ENCODE measurements at regions of chr2 and their contacts with region 1.

Region 1: DNA sequence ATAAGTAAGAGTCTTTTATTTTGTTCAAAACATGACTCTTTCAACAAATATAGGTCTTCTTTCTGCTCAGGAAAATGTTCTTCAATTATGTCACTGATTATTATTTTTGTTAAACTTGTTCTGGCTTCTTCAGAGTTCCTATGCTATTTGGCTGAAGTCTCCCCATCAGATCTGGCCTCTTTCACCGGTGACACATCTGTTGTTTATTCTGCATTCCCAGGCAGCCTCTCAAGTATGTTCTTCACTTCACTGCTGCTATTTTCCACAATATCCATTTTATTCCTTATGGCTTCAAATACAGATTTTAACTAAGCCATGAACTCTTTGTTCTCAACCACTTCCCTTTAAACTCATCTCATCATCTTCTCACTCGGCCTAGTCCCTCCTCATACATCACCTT is 45.7 kb downstream of the HDAC4 start:
- DNase-seq: no peak
- ATAC-seq: no peak
- H3K4me3 ChIP-seq: no peak overlapping the region
- H3K27ac ChIP-seq: no peak overlapping the region
- H3K4me1 ChIP-seq: peaks cover 15% of the 10 kb centered on the region
- H3K27me3 ChIP-seq: no peaks in the 10 kb centered on the region
- CTCF ChIP-seq: no peak
- EP300 ChIP-seq: no peak
- POLR2A ChIP-seq: no peak
- RAD21 ChIP-seq: no peak

Region 2: DNA sequence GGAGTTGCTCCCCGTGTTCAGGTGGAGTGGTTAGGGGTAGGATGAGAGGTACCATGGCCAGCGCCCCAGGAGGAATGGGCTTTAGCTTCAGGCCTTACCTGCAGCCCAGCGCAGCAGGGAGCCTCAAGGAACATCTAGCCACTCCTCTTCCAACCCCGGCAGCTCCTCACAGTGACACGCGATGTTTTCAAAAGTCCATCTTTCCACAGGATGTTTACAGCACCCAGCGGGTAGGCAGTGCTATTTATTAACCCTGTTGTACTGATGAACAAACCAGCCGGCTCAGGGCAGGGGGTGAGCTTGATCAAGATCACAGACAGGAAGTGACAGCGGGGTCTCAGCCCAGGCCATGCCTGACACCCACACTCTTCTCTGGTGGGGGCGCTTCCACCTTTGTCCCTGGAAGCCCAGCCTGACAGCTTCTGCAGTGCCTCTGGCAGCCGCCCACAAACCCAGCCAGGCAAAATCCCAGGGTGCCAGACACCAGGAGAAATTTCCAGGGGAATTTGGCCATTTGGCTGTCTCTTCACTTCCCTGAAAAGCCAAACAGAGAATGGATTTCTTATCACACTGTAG is 1807.2 kb before region 1 on chr2:
- CTCF ChIA-PET with region 1: no interaction called
- POLR2A ChIA-PET with region 1: no interaction called
- in situ Hi-C with region 1: no loop called
- intact Hi-C with region 1: no loop called
- DNase-seq: peak; percentile 30
- ATAC-seq: peak; percentile 40
- H3K4me3 ChIP-seq: peak overlapping the region in 2 of 3 experiments; percentile 20 to 47; a peak in 2 of 6 replicates
- H3K27ac ChIP-seq: no peak overlapping the region
- H3K4me1 ChIP-seq: peaks cover 49% of the 10 kb centered on the region
- H3K27me3 ChIP-seq: peaks cover 5 to 34% of the 10 kb centered on the region in 2 experiments; a peak in 4 of 5 replicates
- CTCF ChIP-seq: no peak
- EP300 ChIP-seq: no peak
- POLR2A ChIP-seq: no peak
- RAD21 ChIP-seq: no peak

Region 3: GRCh38 chr2:239181907-239182581 is 173.1 kb before region 1 on chr2:
- CTCF ChIA-PET with region 1: no interaction called
- POLR2A ChIA-PET with region 1: no interaction called
- in situ Hi-C with region 1: no loop called
- intact Hi-C with region 1: no loop called
- DNase-seq: peak; percentile 71
- ATAC-seq: peak; percentile 89
- H3K4me3 ChIP-seq: no peak overlapping the region
- H3K27ac ChIP-seq: peak overlapping the region; percentile 12
- H3K4me1 ChIP-seq: peaks cover 24% of the 10 kb centered on the region
- H3K27me3 ChIP-seq: no peaks in the 10 kb centered on the region
- CTCF ChIP-seq: no peak
- EP300 ChIP-seq: no peak
- POLR2A ChIP-seq: no peak
- RAD21 ChIP-seq: no peak

Region 4: DNA sequence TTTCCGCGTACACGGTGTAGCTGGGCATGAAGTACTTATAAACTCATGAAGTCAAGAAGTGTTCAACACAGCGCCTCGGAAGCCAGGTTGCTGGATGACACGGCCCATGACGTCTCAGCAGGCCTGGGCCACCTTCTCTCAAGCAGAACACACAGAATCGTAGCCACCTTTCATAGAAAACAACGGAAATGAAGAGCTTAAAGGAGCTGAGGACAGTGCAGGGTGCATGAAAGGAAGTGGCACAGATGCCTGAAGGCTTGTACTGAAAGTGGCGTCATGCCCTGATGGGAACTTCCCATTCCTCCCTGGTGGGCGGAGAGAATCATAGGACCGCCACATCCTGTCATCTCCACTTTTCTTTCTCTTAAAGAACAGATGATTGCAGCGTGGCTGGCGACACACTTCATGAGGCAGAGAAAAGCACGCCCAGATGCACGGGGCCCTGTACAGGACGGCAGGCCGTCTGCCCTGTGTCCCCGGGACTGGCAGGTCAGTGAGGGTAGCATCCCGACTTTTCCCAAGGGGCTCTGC is 14.6 kb after region 1 on chr2:
- CTCF ChIA-PET with region 1: no interaction called
- POLR2A ChIA-PET with region 1: no interaction called
- in situ Hi-C with region 1: no loop called
- intact Hi-C with region 1: loop called (anchors 1 kb)
- DNase-seq: no peak
- ATAC-seq: no peak
- H3K4me3 ChIP-seq: no peak overlapping the region
- H3K27ac ChIP-seq: no peak overlapping the region
- H3K4me1 ChIP-seq: no peaks in the 10 kb centered on the region
- H3K27me3 ChIP-seq: no peaks in the 10 kb centered on the region
- CTCF ChIP-seq: no peak
- EP300 ChIP-seq: no peak
- POLR2A ChIP-seq: no peak
- RAD21 ChIP-seq: no peak

Measured in HepG2 (cell line).